Activated T-helper 2 cell treated with anti-CD3 and anti-CD28 coated beads, Interferon-gamma antibody, Interleukin-2, Interleukin-4, amounts not matched to agents 10 μg/mL and 5 μg/mL and 100 μg/mL, durations not matched to agents 14 hours and 24 hours and 36 hours (primary cell): ENCODE measurements at regions of chr3 and their contacts with region 1.

Region 1: DNA sequence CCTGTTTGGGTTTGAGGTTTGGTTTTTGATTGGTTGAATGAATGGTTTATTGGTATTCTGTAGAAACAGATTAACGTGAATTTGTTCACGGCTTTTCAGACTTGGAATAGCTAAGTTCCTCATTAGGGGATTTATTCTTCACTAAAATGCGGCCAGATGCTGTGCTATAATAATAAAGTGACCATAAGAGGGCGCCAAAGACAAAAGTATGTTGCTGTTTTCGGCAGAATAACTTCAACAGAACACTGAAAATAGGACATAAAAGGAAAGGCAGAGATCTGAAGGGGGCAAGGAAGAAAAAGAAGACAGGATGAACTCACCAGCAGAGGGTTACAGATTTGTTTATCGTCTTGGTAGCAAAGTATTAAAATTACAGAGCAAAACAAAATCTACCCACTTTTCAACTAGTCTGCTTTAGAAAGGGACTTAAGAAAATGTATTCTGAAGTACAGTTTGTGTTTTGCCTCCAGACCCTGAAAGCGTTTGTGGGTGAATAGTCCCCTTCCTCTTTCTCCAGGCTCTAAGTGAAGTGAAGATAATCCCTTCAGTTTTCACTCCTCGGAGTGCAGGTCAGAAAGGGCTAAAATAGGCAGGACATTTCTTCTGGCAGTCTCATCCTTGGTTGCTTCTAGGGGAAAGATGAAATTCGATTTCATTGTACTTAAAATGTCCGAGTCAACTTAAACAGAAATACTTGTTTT is 147.6 kb downstream of the IL20RB start:
- DNase-seq: no peak
- H3K4me3 Mint-ChIP-seq: no peak overlapping the region
- H3K27ac Mint-ChIP-seq: no peak overlapping the region
- H3K4me1 Mint-ChIP-seq: no peaks in the 10 kb centered on the region
- H3K27me3 Mint-ChIP-seq: peaks cover 13% of the 10 kb centered on the region

Region 2: GRCh38 chr3:137343283-137343682 is 237.9 kb after region 1 on chr3:
- intact Hi-C with region 1: no loop called
- DNase-seq: no peak
- H3K4me3 Mint-ChIP-seq: no peak overlapping the region
- H3K27ac Mint-ChIP-seq: no peak overlapping the region
- H3K4me1 Mint-ChIP-seq: no peaks in the 10 kb centered on the region
- H3K27me3 Mint-ChIP-seq: no peaks in the 10 kb centered on the region

Region 3: GRCh38 chr3:137946345-137946973 is 841.0 kb after region 1 on chr3:
- intact Hi-C with region 1: loop called (anchors 5 kb)
- DNase-seq: peak; percentile 15
- H3K4me3 Mint-ChIP-seq: no peak overlapping the region
- H3K27ac Mint-ChIP-seq: no peak overlapping the region
- H3K4me1 Mint-ChIP-seq: no peaks in the 10 kb centered on the region
- H3K27me3 Mint-ChIP-seq: no peaks in the 10 kb centered on the region

Region 4: DNA sequence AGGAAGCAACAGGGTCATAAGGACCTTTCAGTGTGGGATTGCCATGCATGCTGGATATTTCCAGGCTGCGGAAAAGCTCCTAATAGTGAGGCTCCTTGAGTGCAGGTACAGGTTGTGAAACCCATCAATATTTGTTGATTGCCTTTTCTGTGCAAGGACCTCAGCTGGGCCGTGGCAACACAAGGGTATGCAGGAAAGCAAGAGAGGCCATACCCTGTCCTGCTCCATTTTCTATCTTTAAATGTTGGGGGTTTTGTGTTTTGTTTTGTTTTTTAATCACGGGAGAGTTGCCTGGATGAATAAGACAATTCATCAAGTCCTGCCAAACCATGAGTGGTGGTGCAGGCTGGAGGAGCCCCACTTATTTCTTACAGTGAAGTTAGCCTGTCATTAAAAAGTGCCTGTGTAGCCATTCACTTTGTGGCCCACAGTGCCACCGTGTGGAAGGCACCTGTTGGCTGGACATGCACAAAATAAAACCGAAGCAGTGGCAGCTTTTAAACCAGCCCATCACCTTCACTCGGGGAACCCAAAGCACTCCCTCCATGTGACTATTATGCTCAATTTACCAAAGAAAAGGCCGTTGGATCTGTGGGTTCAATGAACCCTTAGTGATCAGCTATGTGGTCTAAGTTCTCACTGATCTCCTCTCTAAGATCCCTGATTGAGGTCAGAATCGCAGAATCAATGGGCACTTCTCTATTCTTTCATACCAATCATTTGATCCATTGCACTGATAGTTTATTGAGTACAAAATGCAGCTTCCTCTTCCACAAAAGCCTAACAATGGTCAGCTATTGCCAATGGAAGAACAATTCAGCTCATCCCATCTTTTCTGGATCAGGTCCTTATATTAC is 946.7 kb after region 1 on chr3:
- intact Hi-C with region 1: loop called (anchors 10 kb)
- DNase-seq: no peak
- H3K4me3 Mint-ChIP-seq: no peak overlapping the region
- H3K27ac Mint-ChIP-seq: no peak overlapping the region
- H3K4me1 Mint-ChIP-seq: no peaks in the 10 kb centered on the region
- H3K27me3 Mint-ChIP-seq: peaks cover 19% of the 10 kb centered on the region